WTC11 (cell line): ENCODE measurements at regions of chr1 and their contacts with region 1.

Region 1: GRCh38 chr1:235971571-235972310 is 93.1 kb downstream of the NID1 start:
- DNase-seq: peak; percentile 93
- ATAC-seq: peak; percentile 97
- H3K4me3 Mint-ChIP-seq: peak overlapping the region; percentile 81
- H3K27ac Mint-ChIP-seq: peak overlapping the region; percentile 72
- H3K4me1 Mint-ChIP-seq: peaks cover 8% of the 10 kb centered on the region
- H3K27me3 Mint-ChIP-seq: no peaks in the 10 kb centered on the region
- CTCF ChIP-seq: peak; percentile 63

Region 2: GRCh38 chr1:235513495-235514366 is 458.0 kb before region 1 on chr1:
- CTCF ChIA-PET with region 1: interaction called, 10 read pairs
- POLR2A ChIA-PET with region 1: no interaction called
- DNase-seq: no peak
- ATAC-seq: peak; percentile 46
- H3K4me3 Mint-ChIP-seq: no peak overlapping the region
- H3K27ac Mint-ChIP-seq: no peak overlapping the region
- H3K4me1 Mint-ChIP-seq: no peaks in the 10 kb centered on the region
- H3K27me3 Mint-ChIP-seq: no peaks in the 10 kb centered on the region
- CTCF ChIP-seq: peak; percentile 69

Region 3: GRCh38 chr1:235838021-235838420 is 133.7 kb before region 1 on chr1:
- CTCF ChIA-PET with region 1: interaction called, 49 read pairs
- POLR2A ChIA-PET with region 1: no interaction called
- DNase-seq: no peak
- ATAC-seq: no peak
- H3K4me3 Mint-ChIP-seq: no peak overlapping the region
- H3K27ac Mint-ChIP-seq: no peak overlapping the region
- H3K4me1 Mint-ChIP-seq: no peaks in the 10 kb centered on the region
- H3K27me3 Mint-ChIP-seq: no peaks in the 10 kb centered on the region
- CTCF ChIP-seq: no peak

Region 4: DNA sequence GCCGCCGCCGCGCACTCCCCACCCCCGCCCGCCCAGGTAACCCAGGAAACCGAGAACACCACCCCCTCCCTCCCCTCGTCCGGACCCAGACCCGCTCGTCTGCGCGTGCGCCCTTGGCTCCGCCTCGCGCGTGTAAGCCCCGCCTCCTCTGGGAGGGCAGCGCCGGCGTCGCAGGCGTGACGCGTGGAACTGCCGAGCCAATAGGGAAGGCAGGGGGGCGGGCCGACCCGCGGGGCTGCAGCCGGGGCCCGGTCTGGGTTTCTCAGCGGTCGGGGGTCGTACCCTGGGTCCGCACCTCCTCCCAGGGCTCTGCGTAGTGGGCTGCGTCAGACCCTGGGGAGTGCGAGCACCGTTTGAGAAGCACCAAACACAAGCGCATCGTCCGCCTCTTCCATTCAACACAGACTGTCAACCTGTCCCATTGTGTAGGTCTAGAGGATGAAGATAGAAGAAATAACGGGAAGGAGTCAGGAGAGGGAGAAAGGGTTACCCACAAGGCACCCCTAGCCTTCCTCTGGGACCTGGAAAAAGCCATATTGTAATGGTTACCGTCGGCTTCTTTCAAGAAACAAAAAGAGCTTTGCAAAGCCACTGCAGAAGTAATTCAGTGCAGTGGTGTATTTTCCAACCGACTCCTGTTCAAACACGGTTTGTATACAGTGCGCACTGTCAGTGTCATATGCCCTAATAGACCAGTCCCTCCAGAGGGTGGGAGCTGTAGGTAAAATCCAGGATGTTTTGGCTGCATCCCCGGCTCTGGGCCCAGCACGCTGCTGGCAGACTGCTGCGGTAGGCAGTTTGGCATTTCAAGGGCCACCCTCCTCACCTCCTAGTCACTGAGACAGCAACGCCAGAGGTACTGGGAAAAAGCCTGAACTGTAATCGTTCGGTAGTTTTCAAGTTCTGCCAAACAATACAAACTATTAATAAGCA is 104.6 kb before region 1 on chr1:
- CTCF ChIA-PET with region 1: interaction called, 85 read pairs
- POLR2A ChIA-PET with region 1: interaction called, 4 read pairs
- DNase-seq: peak; percentile 98
- ATAC-seq: peak; percentile 91
- H3K4me3 Mint-ChIP-seq: peak overlapping the region; percentile 96
- H3K27ac Mint-ChIP-seq: peak overlapping the region; percentile 99
- H3K4me1 Mint-ChIP-seq: peaks cover 15% of the 10 kb centered on the region
- H3K27me3 Mint-ChIP-seq: peaks cover 35% of the 10 kb centered on the region
- CTCF ChIP-seq: no peak

Region 5: GRCh38 chr1:235917267-235917811 is 54.4 kb before region 1 on chr1:
- CTCF ChIA-PET with region 1: interaction called, 13 read pairs
- POLR2A ChIA-PET with region 1: no interaction called
- DNase-seq: no peak
- ATAC-seq: no peak
- H3K4me3 Mint-ChIP-seq: no peak overlapping the region
- H3K27ac Mint-ChIP-seq: no peak overlapping the region
- H3K4me1 Mint-ChIP-seq: peaks cover 22% of the 10 kb centered on the region
- H3K27me3 Mint-ChIP-seq: peaks cover 42% of the 10 kb centered on the region
- CTCF ChIP-seq: no peak

Region 6: DNA sequence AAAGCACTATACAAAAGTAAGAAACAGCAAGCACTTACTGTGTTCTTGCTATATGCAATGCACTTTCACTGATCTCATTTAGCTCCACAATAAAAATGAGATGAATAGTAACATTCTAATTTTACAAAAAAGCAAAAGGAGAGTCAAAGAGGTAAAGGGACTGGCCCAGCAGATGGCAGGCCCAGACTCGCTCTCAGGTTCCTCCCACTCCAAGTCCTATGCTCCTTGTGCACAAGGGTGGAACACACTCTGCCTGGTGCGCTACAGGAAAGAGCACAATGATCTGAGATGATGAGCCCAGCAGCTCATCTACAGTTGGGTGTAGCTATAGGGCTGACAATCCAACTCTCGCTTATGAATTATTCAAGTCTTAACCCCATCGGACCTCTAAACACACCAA is 10.9 kb before region 1 on chr1:
- CTCF ChIA-PET with region 1: interaction called, 36 read pairs
- POLR2A ChIA-PET with region 1: no interaction called
- DNase-seq: no peak
- ATAC-seq: no peak
- H3K4me3 Mint-ChIP-seq: no peak overlapping the region
- H3K27ac Mint-ChIP-seq: no peak overlapping the region
- H3K4me1 Mint-ChIP-seq: no peaks in the 10 kb centered on the region
- H3K27me3 Mint-ChIP-seq: no peaks in the 10 kb centered on the region
- CTCF ChIP-seq: no peak

Region 7: GRCh38 chr1:236035681-236036101 is 64.0 kb after region 1 on chr1:
- CTCF ChIA-PET with region 1: no interaction called
- POLR2A ChIA-PET with region 1: no interaction called
- DNase-seq: no peak
- ATAC-seq: no peak
- H3K4me3 Mint-ChIP-seq: no peak overlapping the region
- H3K27ac Mint-ChIP-seq: no peak overlapping the region
- H3K4me1 Mint-ChIP-seq: no peaks in the 10 kb centered on the region
- H3K27me3 Mint-ChIP-seq: no peaks in the 10 kb centered on the region
- CTCF ChIP-seq: no peak

Region 8: GRCh38 chr1:236124956-236125355 is 153.2 kb after region 1 on chr1:
- CTCF ChIA-PET with region 1: no interaction called
- POLR2A ChIA-PET with region 1: no interaction called
- DNase-seq: no peak
- ATAC-seq: no peak
- H3K4me3 Mint-ChIP-seq: no peak overlapping the region
- H3K27ac Mint-ChIP-seq: no peak overlapping the region
- H3K4me1 Mint-ChIP-seq: peaks cover 12% of the 10 kb centered on the region
- H3K27me3 Mint-ChIP-seq: no peaks in the 10 kb centered on the region; the same call in 1 of the 2 replicates
- CTCF ChIP-seq: no peak